Lower leg skin (tissue), 4 donors: ENCODE measurements at regions of chr2 and their contacts with region 1.

Region 1: GRCh38 chr2:221573430-221574230 is 1.5 kb upstream of the EPHA4 start:
- DNase-seq: peak; percentile 81 to 98
- H3K4me3 ChIP-seq: peak overlapping the region; percentile 46
- CTCF ChIP-seq: peak in 2 of 3 donors; percentile 67 to 91
- POLR2A ChIP-seq: no peak

Region 2: GRCh38 chr2:220165401-220165800 is 1408.2 kb before region 1 on chr2:
- intact Hi-C with region 1: loop called (anchors 10 kb)
- DNase-seq: no peak
- H3K4me3 ChIP-seq: no peak overlapping the region
- CTCF ChIP-seq: no peak
- POLR2A ChIP-seq: no peak

Region 3: GRCh38 chr2:220687231-220687843 is 886.3 kb before region 1 on chr2:
- intact Hi-C with region 1: loop called (anchors 10 kb)
- DNase-seq: peak; percentile 64 to 92
- H3K4me3 ChIP-seq: no peak overlapping the region
- CTCF ChIP-seq: peak in 1 of 3 donors; percentile 30
- POLR2A ChIP-seq: no peak

Region 4: GRCh38 chr2:221596192-221596591 is 22.6 kb after region 1 on chr2:
- intact Hi-C with region 1: no loop called
- DNase-seq: peak in 1 of 2 donors; percentile 52
- H3K4me3 ChIP-seq: no peak overlapping the region
- CTCF ChIP-seq: no peak
- POLR2A ChIP-seq: no peak